ENCODE measurements at regions of chr2 and their contacts with region 1.

Region 1: DNA sequence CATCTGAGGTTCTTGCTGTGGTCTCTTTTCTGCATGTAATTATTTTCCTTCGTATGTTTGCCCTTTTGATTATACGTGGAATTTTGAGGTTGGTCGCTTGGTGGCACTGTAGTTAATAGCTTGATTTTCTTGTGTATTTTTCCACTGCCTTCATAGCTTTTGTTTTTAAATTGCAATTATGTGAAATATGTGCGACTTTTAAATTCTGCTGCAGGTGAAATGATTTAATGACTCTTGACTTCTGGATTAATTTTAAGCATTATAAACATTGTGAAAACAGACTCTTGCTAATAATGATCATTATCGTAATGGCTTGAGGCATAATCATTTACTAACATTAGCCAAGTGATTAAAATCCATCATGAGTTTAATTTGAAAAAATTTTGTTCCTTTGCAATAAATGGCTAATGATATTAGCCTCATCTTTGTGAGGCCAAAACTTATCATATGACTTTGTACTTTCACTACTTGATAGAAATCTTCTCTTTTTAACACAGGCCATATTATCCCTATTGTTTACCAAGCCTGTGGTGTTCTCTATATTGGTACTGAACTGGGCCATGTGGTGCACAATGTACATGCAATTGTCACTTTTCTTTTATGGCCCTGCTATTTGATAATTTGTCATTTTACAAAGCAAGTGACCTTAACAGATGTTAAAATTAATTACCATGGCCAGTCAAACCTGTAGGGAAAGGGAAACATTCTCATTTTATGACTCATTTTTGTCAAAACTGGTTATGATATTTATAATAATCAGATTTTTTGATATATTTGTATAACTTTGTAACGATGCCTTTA is 62.8 kb upstream of the NEUROD1 start:
- DNase-seq: no peak

Region 2: GRCh38 chr2:181070119-181070835 is 672.8 kb before region 1 on chr2:
- intact Hi-C with region 1: no loop called
- DNase-seq: no peak

Region 3: GRCh38 chr2:181904022-181904632 is 161.0 kb after region 1 on chr2:
- intact Hi-C with region 1: loop called in 1 of 2 experiments (anchors 10 kb)
- DNase-seq: no peak

Region 4: GRCh38 chr2:181924336-181924735 is 181.2 kb after region 1 on chr2:
- intact Hi-C with region 1: no loop called
- DNase-seq: no peak

Region 5: GRCh38 chr2:181953881-181954537 is 210.9 kb after region 1 on chr2:
- intact Hi-C with region 1: loop called in 1 of 2 experiments (anchors 5 kb)
- DNase-seq: no peak

Region 6: DNA sequence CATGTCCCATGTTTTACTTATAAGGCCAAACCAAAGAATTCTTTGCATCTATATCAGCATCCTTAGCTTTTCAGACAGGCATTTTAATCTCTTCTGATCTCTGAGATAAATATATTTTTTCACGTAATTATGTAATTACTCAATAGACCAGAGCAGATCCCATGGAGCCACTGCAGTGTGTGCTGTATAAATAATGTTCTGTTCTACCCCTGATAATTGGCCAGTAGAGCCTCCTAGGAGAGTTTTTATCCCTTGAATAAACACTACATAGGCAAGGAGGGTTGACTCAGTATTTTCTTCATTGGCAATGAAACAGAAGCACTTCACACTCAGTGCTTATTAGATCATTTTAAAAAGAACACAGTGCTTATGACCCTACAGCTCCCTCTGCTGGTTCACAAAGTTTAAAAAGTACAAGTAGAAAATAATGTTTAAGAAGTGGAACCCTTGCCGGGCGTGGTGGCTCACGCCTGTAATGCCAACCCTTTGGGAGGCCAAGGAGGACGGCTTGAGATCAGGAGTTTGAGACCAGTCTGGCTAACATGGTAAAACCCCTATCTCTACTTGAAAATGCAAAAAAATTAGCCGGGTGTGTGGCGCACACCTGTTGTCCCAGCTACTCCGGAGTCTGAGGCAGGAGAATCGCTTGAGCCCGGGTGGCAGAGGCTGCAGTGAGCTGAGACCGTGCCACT is 334.5 kb after region 1 on chr2:
- intact Hi-C with region 1: loop called in 1 of 2 experiments (anchors 10 kb)
- DNase-seq: no peak